ENCODE measurements at regions of chr4 and their contacts with region 1.

Region 1: DNA sequence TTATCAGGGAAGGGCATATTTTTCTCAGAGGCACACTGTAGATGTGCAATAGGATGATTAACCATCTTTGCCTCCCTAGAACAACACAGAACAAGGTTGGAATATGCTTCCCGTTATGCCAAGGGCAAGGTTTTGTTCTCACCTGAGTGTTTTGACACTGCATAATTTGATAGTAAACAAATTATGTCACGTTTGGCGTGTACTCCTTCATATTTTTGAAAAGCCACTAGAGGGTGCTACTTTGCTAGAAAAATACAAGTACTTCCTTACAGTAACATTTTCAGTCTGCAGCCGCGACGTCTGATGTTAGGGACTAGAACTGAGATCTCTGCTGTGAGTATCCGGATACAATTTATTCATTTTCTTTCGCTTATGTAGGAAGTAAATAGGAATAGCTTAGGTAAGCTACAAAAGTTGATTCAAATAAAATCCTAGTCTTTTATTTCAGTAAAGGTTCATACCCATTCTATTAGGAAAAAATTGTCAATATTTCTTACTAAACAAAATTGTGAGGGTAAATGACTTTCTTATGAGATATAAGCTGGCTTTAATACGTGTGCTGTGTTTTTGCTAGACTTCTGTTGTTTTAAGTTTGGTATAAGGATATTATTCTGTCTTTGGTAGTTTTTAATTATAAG is 181.1 kb upstream of the WDFY3 start:
- DNase-seq: peak; percentile 49 to 72 (median 58)
- ATAC-seq: peak; percentile 59 to 77 (median 76)
- H3K4me3 ChIP-seq: peak overlapping the region in 8 of 12 donors; percentile 10 to 45 (median 34)
- H3K27ac ChIP-seq: peak overlapping the region in 3 of 12 donors; percentile 4 to 36 (median 23)
- H3K4me1 ChIP-seq: peaks cover 0 to 21% (median 4%) of the 10 kb centered on the region in 12 donors
- H3K27me3 ChIP-seq: no peaks in the 10 kb centered on the region
- CTCF ChIP-seq: peak; percentile 50 to 80 (median 72)
- POLR2A ChIP-seq: no peak

Region 2: DNA sequence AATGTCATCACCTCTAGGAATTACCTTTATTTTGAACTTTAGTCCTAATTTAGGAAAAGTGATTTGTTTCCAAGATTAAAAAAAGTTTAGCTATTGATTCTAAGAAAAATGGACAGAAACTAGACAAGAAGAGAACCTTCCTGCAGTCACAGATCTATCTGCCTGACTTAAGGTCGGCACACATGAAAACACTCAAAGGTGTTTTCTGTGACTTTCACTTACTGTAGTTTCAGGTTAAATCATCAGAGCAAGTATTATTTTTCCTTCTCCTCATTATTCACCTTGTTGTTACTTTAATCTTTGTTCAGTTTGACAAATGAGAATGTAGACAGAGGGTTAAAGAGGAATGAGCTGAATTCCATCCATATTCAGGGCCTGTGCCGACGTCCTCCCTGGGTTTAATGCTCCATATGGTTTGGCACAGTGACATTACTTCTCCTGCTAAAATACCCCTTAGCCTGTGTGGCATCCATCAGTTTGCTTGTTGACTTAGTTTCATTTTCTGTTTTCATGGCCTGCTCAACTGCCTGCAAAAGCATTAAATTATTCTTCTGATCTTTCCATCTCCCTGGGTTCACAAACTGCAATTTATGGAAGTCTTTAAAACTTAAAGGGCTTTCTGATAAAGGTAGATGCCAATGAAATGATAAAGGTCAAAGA is 1001.1 kb before region 1 on chr4:
- intact Hi-C with region 1: no loop called
- DNase-seq: no peak
- ATAC-seq: no peak
- H3K4me3 ChIP-seq: no peak overlapping the region
- H3K27ac ChIP-seq: no peak overlapping the region
- H3K4me1 ChIP-seq: no peaks in the 10 kb centered on the region
- H3K27me3 ChIP-seq: no peaks in the 10 kb centered on the region
- CTCF ChIP-seq: no peak
- POLR2A ChIP-seq: no peak

Region 3: DNA sequence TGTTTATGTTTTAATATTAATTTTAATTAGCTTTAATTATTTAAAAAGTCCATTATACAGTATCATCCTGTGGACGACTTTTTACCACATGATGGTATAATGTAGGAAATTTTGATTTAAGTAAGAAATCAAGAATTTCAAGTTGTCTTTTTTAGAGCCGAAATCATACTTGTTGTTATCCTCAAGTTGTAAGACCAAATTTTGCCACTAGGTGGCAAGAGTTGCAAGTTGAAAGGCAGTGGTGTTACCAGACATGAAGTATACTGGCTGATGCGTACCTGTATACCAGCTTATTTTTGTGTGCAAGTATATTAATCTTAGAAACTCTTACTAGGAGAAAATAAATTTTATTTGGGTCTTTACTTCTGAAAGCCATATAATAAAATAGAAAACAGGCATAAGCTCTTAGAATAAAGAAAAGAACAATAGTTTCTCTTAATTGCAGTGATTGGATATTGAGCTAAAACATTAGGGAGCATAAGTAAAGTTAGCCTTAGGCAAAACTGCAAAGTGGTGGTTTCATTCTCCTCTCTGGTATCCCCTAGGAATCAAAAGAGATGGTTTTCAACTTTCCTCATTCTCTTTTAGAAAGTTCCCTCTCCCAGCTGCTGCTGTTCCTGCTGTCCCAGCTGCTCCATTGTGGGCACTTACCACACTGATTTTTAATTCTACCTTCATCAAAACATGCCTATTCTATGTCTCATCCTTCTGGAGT is 63.0 kb before region 1 on chr4:
- intact Hi-C with region 1: loop called in 4 of 10 experiments (anchors 1 to 5 kb)
- DNase-seq: peak in 2 of 5 donors; percentile 25 to 36
- ATAC-seq: peak in 2 of 4 donors; percentile 63 to 75
- H3K4me3 ChIP-seq: no peak overlapping the region
- H3K27ac ChIP-seq: no peak overlapping the region
- H3K4me1 ChIP-seq: peaks cover 0 to 5% (median 0%) of the 10 kb centered on the region in 12 donors
- H3K27me3 ChIP-seq: no peaks in the 10 kb centered on the region
- CTCF ChIP-seq: peak; percentile 58 to 87 (median 74)
- POLR2A ChIP-seq: no peak

Region 4: GRCh38 chr4:85370430-85371032 is 223.0 kb after region 1 on chr4:
- intact Hi-C with region 1: loop called (anchors 2 to 10 kb)
- DNase-seq: peak in 4 of 5 donors; percentile 22 to 32 (median 24)
- ATAC-seq: peak; percentile 22 to 72 (median 67)
- H3K4me3 ChIP-seq: no peak overlapping the region
- H3K27ac ChIP-seq: no peak overlapping the region
- H3K4me1 ChIP-seq: peaks cover 0 to 18% (median 5%) of the 10 kb centered on the region in 12 donors
- H3K27me3 ChIP-seq: no peaks in the 10 kb centered on the region
- CTCF ChIP-seq: peak; percentile 59 to 81 (median 66)
- POLR2A ChIP-seq: no peak

Region 5: GRCh38 chr4:85448869-85449626 is 301.5 kb after region 1 on chr4:
- intact Hi-C with region 1: loop called in 1 of 10 experiments (anchors 10 kb)
- DNase-seq: no peak
- ATAC-seq: no peak
- H3K4me3 ChIP-seq: no peak overlapping the region
- H3K27ac ChIP-seq: no peak overlapping the region
- H3K4me1 ChIP-seq: peaks cover 0 to 10% (median 2%) of the 10 kb centered on the region in 12 donors
- H3K27me3 ChIP-seq: no peaks in the 10 kb centered on the region
- CTCF ChIP-seq: no peak
- POLR2A ChIP-seq: no peak

Region 6: GRCh38 chr4:85807247-85807950 is 659.8 kb after region 1 on chr4:
- intact Hi-C with region 1: loop called in 1 of 10 experiments (anchors 10 kb)
- DNase-seq: peak; percentile 58 to 78 (median 76)
- ATAC-seq: peak; percentile 93 to 96 (median 95)
- H3K4me3 ChIP-seq: no peak overlapping the region
- H3K27ac ChIP-seq: peak overlapping the region; percentile 31 to 80 (median 54)
- H3K4me1 ChIP-seq: peaks cover 0 to 50% (median 24%) of the 10 kb centered on the region in 12 donors
- H3K27me3 ChIP-seq: no peaks in the 10 kb centered on the region
- CTCF ChIP-seq: peak in 1 of 12 donors; percentile 7
- POLR2A ChIP-seq: no peak

Region 7: GRCh38 chr4:85979276-85979675 is 831.7 kb after region 1 on chr4:
- intact Hi-C with region 1: loop called in 3 of 10 experiments (anchors 5 kb)
- DNase-seq: no peak
- ATAC-seq: no peak
- H3K4me3 ChIP-seq: no peak overlapping the region
- H3K27ac ChIP-seq: no peak overlapping the region
- H3K4me1 ChIP-seq: no peaks in the 10 kb centered on the region
- H3K27me3 ChIP-seq: no peaks in the 10 kb centered on the region
- CTCF ChIP-seq: no peak
- POLR2A ChIP-seq: no peak